Calu3 (cell line): ENCODE measurements at regions of chr2 and their contacts with region 1.

Region 1: GRCh38 chr2:67037655-67038054 is 359.5 kb upstream of the ETAA1 start:
- DNase-seq: peak; percentile 68
- H3K4me3 Mint-ChIP-seq: peak overlapping the region; percentile 27
- H3K27ac Mint-ChIP-seq: peak overlapping the region; percentile 66
- H3K4me1 Mint-ChIP-seq: peaks cover 73% of the 10 kb centered on the region
- H3K27me3 Mint-ChIP-seq: no peaks in the 10 kb centered on the region
- CTCF ChIP-seq: no peak

Region 2: DNA sequence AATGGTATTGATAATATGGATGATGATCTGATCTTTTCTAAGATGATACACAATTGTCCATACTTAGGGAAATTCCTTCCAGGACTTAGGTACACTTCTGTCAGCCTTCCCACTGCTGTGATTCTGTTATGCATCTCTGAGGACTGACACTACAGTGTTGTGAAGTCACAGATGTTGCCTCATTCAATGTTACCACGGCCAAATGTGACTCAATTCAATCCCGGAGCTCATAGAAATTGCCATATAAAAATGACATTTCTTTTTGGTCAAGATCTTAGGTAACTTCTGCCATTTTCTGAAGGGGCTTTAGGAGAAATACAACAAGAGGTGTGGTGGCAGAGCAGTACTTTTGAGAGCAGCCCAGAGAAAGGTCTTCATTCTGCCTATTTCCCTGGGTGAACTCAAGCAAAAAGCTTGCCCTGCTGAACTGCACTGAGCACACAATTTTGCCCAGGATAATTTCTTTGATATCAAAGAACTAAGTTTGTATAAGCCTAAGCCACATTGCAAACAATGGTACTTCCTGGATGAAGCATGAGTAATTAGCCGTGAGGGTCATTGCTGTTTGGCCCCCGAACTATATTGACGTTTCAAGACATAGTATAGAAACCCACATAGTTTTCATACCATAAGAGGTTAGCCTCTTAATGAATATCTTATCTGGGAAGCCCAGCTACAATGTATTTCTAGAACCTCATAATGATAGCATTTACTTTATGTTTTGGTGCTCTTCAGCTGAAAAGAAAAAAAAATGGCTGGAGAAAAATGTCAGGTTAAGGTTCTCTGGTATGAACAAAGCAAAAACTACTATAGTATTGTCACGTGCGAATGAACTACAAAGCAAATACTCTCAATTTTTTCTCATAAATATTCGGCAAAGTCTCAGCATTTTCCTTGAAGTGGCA is 165.3 kb before region 1 on chr2:
- CTCF ChIA-PET with region 1: no interaction called
- intact Hi-C with region 1: loop called (anchors 5 kb)
- DNase-seq: peak; percentile 24
- H3K4me3 Mint-ChIP-seq: peak overlapping the region; percentile 55
- H3K27ac Mint-ChIP-seq: peak overlapping the region; percentile 84
- H3K4me1 Mint-ChIP-seq: peaks cover 47% of the 10 kb centered on the region
- H3K27me3 Mint-ChIP-seq: no peaks in the 10 kb centered on the region
- CTCF ChIP-seq: no peak

Region 3: GRCh38 chr2:66929632-66930338 is 107.9 kb before region 1 on chr2:
- CTCF ChIA-PET with region 1: no interaction called
- intact Hi-C with region 1: loop called (anchors 10 kb)
- DNase-seq: peak; percentile 82
- H3K4me3 Mint-ChIP-seq: peak overlapping the region; percentile 52
- H3K27ac Mint-ChIP-seq: peak overlapping the region; percentile 84
- H3K4me1 Mint-ChIP-seq: peaks cover 37% of the 10 kb centered on the region
- H3K27me3 Mint-ChIP-seq: no peaks in the 10 kb centered on the region
- CTCF ChIP-seq: no peak

Region 4: DNA sequence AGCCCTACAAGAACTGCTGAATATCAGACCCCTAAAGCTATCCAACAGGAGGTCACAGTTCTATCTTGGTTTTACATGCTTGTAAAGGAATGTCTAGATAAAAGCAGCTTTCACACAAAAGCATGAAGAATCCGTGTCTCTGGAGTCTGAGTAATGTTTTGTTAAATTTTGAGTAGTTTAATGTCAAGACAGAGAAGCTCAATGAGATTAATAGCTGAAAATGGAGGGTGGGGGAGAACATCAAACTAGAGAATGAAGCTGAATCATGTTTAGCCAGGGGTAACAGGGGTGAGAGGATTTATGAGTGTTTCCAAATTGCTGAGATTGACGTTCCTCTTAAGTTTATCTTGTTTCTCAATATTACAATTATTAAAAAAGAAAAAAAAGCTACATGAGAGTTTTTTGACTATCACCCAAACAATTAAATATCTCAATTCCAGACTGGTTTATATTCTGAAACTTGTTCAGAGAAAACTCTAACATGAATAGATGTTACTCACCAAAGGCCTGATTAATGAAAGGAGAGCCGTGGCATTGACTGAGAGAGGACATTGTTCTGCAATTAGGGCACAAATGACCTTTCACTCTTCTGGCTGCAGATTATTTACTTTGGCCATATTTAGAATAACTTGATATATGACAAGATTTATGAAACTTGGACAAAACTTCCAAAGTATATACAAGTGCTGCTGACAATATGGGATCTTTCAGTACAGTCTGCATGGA is 93.0 kb after region 1 on chr2:
- CTCF ChIA-PET with region 1: no interaction called
- intact Hi-C with region 1: loop called (anchors 10 kb)
- DNase-seq: no peak
- H3K4me3 Mint-ChIP-seq: no peak overlapping the region
- H3K27ac Mint-ChIP-seq: no peak overlapping the region
- H3K4me1 Mint-ChIP-seq: peaks cover 9% of the 10 kb centered on the region
- H3K27me3 Mint-ChIP-seq: no peaks in the 10 kb centered on the region
- CTCF ChIP-seq: no peak